ENCODE measurements at regions of chr15 and their contacts with region 1.

Region 1: GRCh38 chr15:85865070-85865684 is 70.5 kb upstream of the KLHL25 start:
- DNase-seq: peak; percentile 67 to 80
- ATAC-seq: peak; percentile 89 to 96
- H3K4me3 ChIP-seq: no peak overlapping the region
- H3K27ac ChIP-seq: no peak overlapping the region
- H3K4me1 ChIP-seq: no peaks in the 10 kb centered on the region
- CTCF ChIP-seq: peak; percentile 93
- EP300 ChIP-seq: no peak
- POLR2A ChIP-seq: no peak
- RAD21 ChIP-seq: peak; percentile 94 to 97

Region 2: DNA sequence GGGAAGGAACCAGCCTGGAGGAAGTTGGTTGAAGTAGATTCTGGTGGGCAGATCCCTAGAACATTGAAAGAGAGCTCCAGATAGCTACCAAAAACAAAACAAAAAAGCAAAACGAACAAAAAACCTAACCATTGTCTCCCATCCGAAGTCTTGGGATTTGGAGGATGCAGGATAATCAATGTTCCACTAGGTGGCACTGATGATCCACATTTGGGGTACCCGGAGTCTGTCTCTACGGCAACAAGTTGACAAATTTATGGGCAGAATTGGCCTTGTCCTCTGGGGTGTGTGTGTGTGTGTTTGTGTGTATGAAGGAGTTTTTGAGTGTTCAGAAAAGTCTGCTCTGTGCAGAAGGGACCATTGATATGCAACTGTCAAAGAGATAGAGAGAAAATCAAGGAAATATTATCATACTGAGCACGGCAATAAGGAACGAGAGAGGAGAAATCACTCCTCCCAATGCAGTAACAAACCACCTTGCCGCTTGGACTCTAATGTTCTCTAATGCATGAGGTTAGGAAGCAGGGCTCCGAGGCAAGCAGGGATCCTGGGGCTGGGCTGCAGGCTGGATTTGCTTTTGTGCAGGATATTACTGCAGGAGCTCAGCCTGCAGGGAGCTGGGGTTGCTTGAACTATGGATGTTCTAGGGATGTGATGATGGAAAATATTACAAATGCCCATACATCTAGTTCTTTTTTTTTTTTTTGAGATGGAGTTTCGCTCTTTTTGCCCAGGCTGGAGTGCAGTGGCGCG is 10.7 kb before region 1 on chr15:
- CTCF ChIA-PET with region 1: interaction called, 12 read pairs
- POLR2A ChIA-PET with region 1: no interaction called
- DNase-seq: peak; percentile 76 to 88
- ATAC-seq: peak; percentile 64 to 81; a peak in 4 of 6 replicates
- H3K4me3 ChIP-seq: no peak overlapping the region
- H3K27ac ChIP-seq: no peak overlapping the region
- H3K4me1 ChIP-seq: no peaks in the 10 kb centered on the region
- CTCF ChIP-seq: peak; percentile 94
- EP300 ChIP-seq: no peak
- POLR2A ChIP-seq: no peak
- RAD21 ChIP-seq: peak; percentile 91 to 95

Region 3: DNA sequence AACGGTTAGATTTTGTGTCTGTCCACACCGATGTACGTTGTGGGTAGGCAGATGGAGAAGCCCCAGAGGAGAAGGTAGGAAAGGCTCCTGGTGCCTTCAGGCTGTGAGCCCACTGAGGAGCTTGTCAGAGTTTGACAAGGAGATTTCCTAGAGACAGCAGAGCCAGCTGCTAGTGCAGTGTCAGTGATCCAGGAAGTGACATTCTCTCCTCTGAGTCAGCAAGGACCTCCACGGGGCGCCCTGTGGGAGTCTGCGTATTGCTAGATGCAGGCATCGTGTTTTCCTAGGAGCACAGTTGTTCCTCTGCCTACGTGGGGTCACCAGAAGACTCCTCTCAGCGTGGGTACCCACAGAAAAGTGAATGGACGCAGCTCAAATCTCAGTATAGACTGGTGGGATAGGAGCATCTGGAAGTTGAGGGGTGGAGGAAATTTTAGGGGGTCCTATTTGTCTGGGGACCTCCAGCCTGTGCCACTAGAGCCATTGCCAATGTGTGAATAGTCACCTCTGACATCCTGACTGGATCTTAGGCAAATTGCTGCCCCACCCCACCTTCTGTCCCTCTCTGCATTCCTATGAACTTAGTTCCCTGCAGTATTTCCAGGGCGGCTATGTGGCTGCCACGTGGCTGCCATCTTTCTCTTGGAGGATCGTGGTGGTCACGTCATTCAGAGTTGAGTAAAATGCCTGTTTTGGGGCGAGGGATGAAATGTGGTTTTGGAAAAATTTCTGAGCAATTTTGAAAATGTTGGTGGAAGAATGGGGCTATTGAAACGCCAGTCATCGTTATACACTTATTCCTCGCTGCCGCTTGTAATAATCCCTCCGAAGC is 14.4 kb after region 1 on chr15:
- CTCF ChIA-PET with region 1: interaction called, 20 read pairs
- POLR2A ChIA-PET with region 1: no interaction called
- DNase-seq: peak in 1 of 2 experiments; percentile 28
- ATAC-seq: peak; percentile 71 to 76; a peak in 5 of 6 replicates
- H3K4me3 ChIP-seq: no peak overlapping the region
- H3K27ac ChIP-seq: no peak overlapping the region
- H3K4me1 ChIP-seq: no peaks in the 10 kb centered on the region
- CTCF ChIP-seq: no peak
- EP300 ChIP-seq: no peak
- POLR2A ChIP-seq: no peak
- RAD21 ChIP-seq: no peak

Measured in A549 (cell line).